Common myeloid progenitor, CD34-positive (primary cell): ENCODE measurements at regions of chr11 and their contacts with region 1.

Region 1: DNA sequence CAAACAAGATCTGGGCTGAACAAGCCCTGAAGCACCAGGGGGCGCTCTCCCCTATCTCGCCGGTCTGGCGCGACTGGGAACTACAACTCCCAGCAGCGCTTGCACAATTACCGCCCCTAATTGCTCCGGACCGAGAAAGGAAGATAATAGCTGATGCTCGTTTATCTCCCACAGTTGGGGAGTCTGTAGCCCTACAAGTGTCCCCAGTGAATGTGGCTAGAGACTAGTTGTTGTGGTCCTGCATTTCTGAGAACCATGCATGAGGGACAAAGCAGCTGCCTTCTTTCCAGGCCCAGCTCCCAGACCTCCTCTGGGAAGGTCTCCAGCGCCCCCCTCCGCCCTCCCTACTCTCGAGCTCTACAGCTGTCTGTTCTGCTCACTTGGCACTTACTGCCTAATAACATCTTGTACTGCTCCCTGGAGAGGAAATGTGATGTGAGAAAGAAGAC is 34.4 kb downstream of the NRXN2 start:
- DNase-seq: peak; percentile 93 to 96 (median 95)
- H3K4me3 ChIP-seq: peak overlapping the region; percentile 35 to 79 (median 58)
- H3K27ac ChIP-seq: no peak overlapping the region
- H3K4me1 ChIP-seq: peaks cover 3 to 58% (median 36%) of the 10 kb centered on the region in 4 experiments
- H3K27me3 ChIP-seq: peaks cover 0 to 6% (median 0%) of the 10 kb centered on the region in 5 experiments

Region 2: GRCh38 chr11:62985041-62985750 is 1703.4 kb before region 1 on chr11:
- CTCF ChIA-PET with region 1: no interaction called
- POLR2A ChIA-PET with region 1: no interaction called
- DNase-seq: no peak
- H3K4me3 ChIP-seq: no peak overlapping the region
- H3K27ac ChIP-seq: no peak overlapping the region
- H3K4me1 ChIP-seq: no peaks in the 10 kb centered on the region
- H3K27me3 ChIP-seq: peaks cover 0 to 3% (median 0%) of the 10 kb centered on the region in 5 experiments

Region 3: DNA sequence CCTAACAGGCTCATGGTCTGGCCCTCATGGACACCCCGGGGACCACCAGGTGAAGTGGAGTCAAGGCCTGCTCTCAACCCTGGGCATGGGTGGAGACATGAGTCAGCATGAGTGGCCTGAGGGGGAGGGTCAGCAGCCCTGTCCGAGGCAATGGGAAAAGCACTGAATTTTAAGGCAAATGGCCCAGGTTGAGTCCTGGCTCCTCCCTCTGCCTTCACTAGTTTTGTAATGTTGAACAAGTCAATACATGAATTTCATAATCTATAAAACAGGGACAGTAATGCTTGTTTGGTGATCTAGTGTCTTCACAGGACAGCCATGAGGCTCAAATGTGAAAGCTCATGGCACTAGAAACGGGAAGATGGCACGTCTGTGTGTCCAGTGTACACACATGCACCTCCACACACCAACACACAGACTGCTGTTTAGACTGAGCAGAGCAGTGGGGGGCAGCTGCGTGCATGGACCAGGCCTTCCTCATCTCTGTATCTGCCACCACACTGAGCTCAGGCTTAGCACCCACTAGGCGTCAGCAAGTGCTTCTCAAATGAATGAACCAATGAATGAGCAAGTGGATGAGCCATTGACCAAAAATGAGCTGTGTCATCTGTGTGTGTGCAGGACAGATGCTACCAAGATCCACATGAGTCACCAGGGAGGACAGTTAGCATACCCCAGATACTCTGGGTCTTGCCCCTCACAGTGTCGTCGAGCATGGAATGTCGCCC is 29.0 kb before region 1 on chr11:
- CTCF ChIA-PET with region 1: interaction called, 11 read pairs
- POLR2A ChIA-PET with region 1: no interaction called
- DNase-seq: peak in 2 of 3 donors; percentile 61 to 74
- H3K4me3 ChIP-seq: no peak overlapping the region
- H3K27ac ChIP-seq: no peak overlapping the region
- H3K4me1 ChIP-seq: peaks cover 0 to 72% (median 46%) of the 10 kb centered on the region in 4 experiments
- H3K27me3 ChIP-seq: no peaks in the 10 kb centered on the region

Region 4: GRCh38 chr11:64675450-64676260 is 12.9 kb before region 1 on chr11:
- CTCF ChIA-PET with region 1: interaction called, 28 read pairs
- POLR2A ChIA-PET with region 1: no interaction called
- DNase-seq: peak in 2 of 3 donors; percentile 58 to 66
- H3K4me3 ChIP-seq: no peak overlapping the region
- H3K27ac ChIP-seq: no peak overlapping the region
- H3K4me1 ChIP-seq: peaks cover 0 to 27% (median 16%) of the 10 kb centered on the region in 4 experiments
- H3K27me3 ChIP-seq: peaks cover 0 to 4% (median 0%) of the 10 kb centered on the region in 5 experiments

Region 5: DNA sequence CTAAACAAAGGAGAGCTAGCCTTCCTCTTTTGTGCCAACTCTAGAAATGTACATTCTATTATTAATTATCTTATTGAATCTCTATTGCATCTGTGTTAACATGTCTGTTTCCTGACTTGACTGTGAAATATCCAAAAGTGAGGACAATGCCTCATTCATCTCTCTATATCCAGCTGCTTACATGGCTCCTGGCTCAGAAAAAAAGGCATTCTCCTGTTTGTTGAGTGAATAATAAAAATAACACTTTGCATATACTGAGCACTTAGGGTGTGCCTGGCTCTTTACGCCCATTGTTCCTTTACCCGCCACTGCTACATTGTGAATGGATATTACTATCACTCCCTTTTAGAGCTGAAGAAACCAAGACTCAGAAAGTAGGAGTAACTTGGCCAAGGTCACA is 14.5 kb after region 1 on chr11:
- CTCF ChIA-PET with region 1: interaction called, 48 read pairs
- POLR2A ChIA-PET with region 1: interaction called, 3 read pairs
- DNase-seq: no peak
- H3K4me3 ChIP-seq: no peak overlapping the region
- H3K27ac ChIP-seq: no peak overlapping the region
- H3K4me1 ChIP-seq: no peaks in the 10 kb centered on the region
- H3K27me3 ChIP-seq: peaks cover 0 to 6% (median 0%) of the 10 kb centered on the region in 5 experiments

Region 6: DNA sequence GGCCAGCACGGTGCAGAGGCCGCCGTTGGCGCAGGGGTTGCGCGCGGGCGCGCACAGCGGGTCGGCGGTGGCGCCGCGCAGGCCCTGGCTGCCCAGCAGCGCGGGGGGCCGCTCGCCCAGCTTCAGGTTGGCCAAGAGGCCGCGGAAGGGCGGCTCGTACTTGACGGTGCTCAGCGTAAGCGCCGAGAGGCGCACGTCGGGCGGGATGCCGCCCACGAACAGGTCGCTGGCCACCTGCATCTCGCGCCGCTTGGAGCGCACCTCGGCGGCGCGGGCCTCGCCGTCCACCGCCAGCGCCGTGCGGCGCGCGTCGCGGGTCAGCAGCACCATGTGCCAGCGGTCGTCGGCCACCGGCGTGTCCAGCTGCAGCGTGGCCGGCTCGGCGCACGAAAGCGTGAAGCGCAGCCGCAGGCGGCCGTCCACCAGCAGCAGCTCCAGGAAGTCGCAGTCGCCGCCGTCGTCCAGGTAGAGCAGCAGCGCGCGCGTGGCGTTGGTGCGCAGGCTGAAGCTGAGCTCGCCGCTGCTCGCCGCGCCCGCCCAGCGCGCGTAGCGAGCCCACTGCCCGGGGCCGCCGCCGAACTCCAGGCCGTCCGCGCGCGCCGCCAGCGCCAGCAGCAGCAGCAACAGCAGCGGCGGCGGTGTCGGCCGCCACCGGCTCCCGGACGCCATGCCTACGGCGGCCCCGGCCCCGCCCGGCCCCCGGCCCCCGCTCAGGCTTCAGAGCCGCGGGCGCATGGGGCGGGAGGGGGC is 24.6 kb after region 1 on chr11:
- CTCF ChIA-PET with region 1: interaction called, 15 read pairs
- POLR2A ChIA-PET with region 1: no interaction called
- DNase-seq: peak; percentile 54 to 83 (median 78)
- H3K4me3 ChIP-seq: peak overlapping the region in 4 of 7 experiments; percentile 8 to 42 (median 15)
- H3K27ac ChIP-seq: no peak overlapping the region
- H3K4me1 ChIP-seq: peaks cover 0 to 40% (median 37%) of the 10 kb centered on the region in 4 experiments
- H3K27me3 ChIP-seq: peaks cover 0 to 73% (median 35%) of the 10 kb centered on the region in 5 experiments